ENCODE measurements at regions of chr19 and their contacts with region 1.

Region 1: GRCh38 chr19:17996826-17997316 is 11.1 kb upstream of the ARRDC2 start:
- DNase-seq: peak; percentile 90
- ATAC-seq: peak; percentile 60
- H3K4me3 ChIP-seq: peak overlapping the region; percentile 48; the same call in 1 of the 2 replicates
- H3K27ac ChIP-seq: no peak overlapping the region
- H3K4me1 ChIP-seq: peaks cover 15% of the 10 kb centered on the region
- H3K27me3 ChIP-seq: no peaks in the 10 kb centered on the region
- CTCF ChIP-seq: peak; percentile 93

Region 2: GRCh38 chr19:17873786-17874757 is 122.8 kb before region 1 on chr19:
- CTCF ChIA-PET with region 1: no interaction called
- POLR2A ChIA-PET with region 1: no interaction called
- intact Hi-C with region 1: loop called (anchors 5 kb)
- DNase-seq: peak; percentile 60
- ATAC-seq: peak; percentile 56
- H3K4me3 ChIP-seq: peak overlapping the region; percentile 65
- H3K27ac ChIP-seq: no peak overlapping the region
- H3K4me1 ChIP-seq: peaks cover 5% of the 10 kb centered on the region; the same call in 1 of the 2 replicates
- H3K27me3 ChIP-seq: 0 out of 2 replicates have a peak, but pooled peaks cover 12% of the 10 kb centered on the region
- CTCF ChIP-seq: no peak

Region 3: GRCh38 chr19:17926044-17926443 is 70.8 kb before region 1 on chr19:
- CTCF ChIA-PET with region 1: no interaction called
- POLR2A ChIA-PET with region 1: no interaction called
- intact Hi-C with region 1: no loop called
- DNase-seq: no peak
- ATAC-seq: no peak
- H3K4me3 ChIP-seq: no peak overlapping the region
- H3K27ac ChIP-seq: no peak overlapping the region
- H3K4me1 ChIP-seq: no peaks in the 10 kb centered on the region
- H3K27me3 ChIP-seq: no peaks in the 10 kb centered on the region
- CTCF ChIP-seq: no peak